Psoas muscle (tissue), 8 donors: ENCODE measurements at regions of chr9 and their contacts with region 1.

Region 1: GRCh38 chr9:93962561-93963440 is 7.6 kb upstream of the BARX1 start:
- DNase-seq: peak; percentile 75 to 86
- ATAC-seq: peak; percentile 76 to 95 (median 87)
- H3K4me3 ChIP-seq: no peak overlapping the region
- H3K27ac ChIP-seq: no peak overlapping the region
- H3K4me1 ChIP-seq: peaks cover 4% of the 10 kb centered on the region
- H3K27me3 ChIP-seq: peaks cover 0 to 36% (median 15%) of the 10 kb centered on the region in 3 donors
- CTCF ChIP-seq: peak; percentile 85

Region 2: DNA sequence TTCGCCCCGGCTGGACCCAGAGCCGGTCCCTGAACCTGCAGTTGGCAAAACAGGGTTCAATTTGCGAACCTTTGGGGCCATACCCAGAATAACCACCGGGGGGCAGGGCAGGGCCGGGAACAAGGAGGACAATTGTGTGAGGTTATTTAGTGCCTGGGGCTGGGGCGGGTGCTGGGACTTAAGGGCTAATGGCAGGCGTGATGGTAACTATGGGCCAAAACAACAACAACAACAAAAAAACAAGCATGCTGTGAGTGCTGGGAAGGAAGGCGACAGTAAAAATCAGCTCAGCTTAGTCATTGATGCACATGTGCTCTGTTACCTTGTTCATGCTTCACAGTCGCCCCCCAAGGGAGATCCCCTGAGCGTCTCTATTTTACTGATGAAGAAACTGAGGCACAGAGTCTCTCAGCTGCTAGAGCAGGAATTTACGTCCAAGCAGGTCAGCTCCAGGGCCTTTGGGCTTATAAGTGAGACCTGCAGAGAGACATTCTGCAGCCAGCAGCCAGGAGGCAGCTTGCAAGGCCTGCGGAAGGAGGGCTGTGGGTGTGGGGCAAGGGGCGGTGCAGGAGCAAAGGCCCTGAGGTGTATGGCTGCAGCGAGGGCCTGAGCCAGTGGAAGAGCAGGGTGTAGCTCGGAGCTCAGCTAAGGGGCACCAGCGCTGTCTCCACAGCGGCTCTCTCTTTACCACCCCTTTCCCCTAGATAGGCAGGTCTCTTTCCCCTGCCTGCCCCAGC is 280.4 kb before region 1 on chr9:
- intact Hi-C with region 1: loop called (anchors 1 to 2 kb)
- DNase-seq: peak in 1 of 2 donors; percentile 58
- ATAC-seq: peak; percentile 60 to 80 (median 74)
- H3K4me3 ChIP-seq: no peak overlapping the region
- H3K27ac ChIP-seq: no peak overlapping the region
- H3K4me1 ChIP-seq: no peaks in the 10 kb centered on the region
- H3K27me3 ChIP-seq: peaks cover 0 to 2% (median 0%) of the 10 kb centered on the region in 3 donors
- CTCF ChIP-seq: peak; percentile 69

Region 3: GRCh38 chr9:93827545-93828330 is 135.1 kb before region 1 on chr9:
- intact Hi-C with region 1: loop called in 1 of 2 experiments (anchors 5 kb)
- DNase-seq: peak; percentile 45 to 71
- ATAC-seq: peak; percentile 90 to 98 (median 96)
- H3K4me3 ChIP-seq: peak overlapping the region; percentile 65
- H3K27ac ChIP-seq: no peak overlapping the region
- H3K4me1 ChIP-seq: peaks cover 7% of the 10 kb centered on the region
- H3K27me3 ChIP-seq: peaks cover 0 to 24% (median 11%) of the 10 kb centered on the region in 3 donors
- CTCF ChIP-seq: peak; percentile 80

Region 4: DNA sequence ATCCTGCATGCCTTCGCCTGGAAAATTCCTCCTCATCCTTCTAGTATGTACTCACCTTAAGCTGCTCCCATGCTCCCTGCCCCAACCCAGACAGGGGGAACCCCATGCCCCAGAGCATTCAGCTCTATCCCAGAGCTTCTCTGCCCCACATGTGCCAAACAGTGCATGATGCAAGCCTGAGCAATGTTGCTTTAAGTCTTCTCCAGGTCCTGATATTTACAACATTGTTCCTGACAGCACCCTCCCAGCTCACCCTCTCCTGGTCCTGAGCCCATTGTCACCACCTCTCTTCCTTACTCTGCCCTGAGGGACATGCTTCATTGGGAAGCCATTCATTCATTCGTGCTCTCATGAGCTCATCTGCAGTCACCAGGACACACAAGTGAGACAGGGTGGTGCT is 15.8 kb after region 1 on chr9:
- intact Hi-C with region 1: no loop called
- DNase-seq: no peak
- ATAC-seq: no peak
- H3K4me3 ChIP-seq: no peak overlapping the region
- H3K27ac ChIP-seq: no peak overlapping the region
- H3K4me1 ChIP-seq: no peaks in the 10 kb centered on the region
- H3K27me3 ChIP-seq: peaks cover 0 to 11% (median 3%) of the 10 kb centered on the region in 3 donors
- CTCF ChIP-seq: no peak